Activated T-helper 2 cell treated with anti-CD3 and anti-CD28 coated beads, Interferon-gamma antibody, Interleukin-2, Interleukin-4, amounts not matched to agents 10 μg/mL and 5 μg/mL and 100 μg/mL, durations not matched to agents 14 hours and 24 hours and 36 hours (primary cell): ENCODE measurements at regions of chr3 and their contacts with region 1.

Region 1: GRCh38 chr3:128680602-128681368 is 30.2 kb upstream of the RPN1 start:
- DNase-seq: peak; percentile 96
- H3K4me3 Mint-ChIP-seq: peak overlapping the region; percentile 84
- H3K27ac Mint-ChIP-seq: peak overlapping the region; percentile 98
- H3K4me1 Mint-ChIP-seq: peaks cover 22% of the 10 kb centered on the region
- H3K27me3 Mint-ChIP-seq: no peaks in the 10 kb centered on the region

Region 2: GRCh38 chr3:128617557-128618397 is 63.0 kb before region 1 on chr3:
- intact Hi-C with region 1: loop called (anchors 2 kb)
- DNase-seq: peak; percentile 99
- H3K4me3 Mint-ChIP-seq: peak overlapping the region; percentile 86
- H3K27ac Mint-ChIP-seq: peak overlapping the region; percentile 84
- H3K4me1 Mint-ChIP-seq: peaks cover 31% of the 10 kb centered on the region
- H3K27me3 Mint-ChIP-seq: no peaks in the 10 kb centered on the region

Region 3: DNA sequence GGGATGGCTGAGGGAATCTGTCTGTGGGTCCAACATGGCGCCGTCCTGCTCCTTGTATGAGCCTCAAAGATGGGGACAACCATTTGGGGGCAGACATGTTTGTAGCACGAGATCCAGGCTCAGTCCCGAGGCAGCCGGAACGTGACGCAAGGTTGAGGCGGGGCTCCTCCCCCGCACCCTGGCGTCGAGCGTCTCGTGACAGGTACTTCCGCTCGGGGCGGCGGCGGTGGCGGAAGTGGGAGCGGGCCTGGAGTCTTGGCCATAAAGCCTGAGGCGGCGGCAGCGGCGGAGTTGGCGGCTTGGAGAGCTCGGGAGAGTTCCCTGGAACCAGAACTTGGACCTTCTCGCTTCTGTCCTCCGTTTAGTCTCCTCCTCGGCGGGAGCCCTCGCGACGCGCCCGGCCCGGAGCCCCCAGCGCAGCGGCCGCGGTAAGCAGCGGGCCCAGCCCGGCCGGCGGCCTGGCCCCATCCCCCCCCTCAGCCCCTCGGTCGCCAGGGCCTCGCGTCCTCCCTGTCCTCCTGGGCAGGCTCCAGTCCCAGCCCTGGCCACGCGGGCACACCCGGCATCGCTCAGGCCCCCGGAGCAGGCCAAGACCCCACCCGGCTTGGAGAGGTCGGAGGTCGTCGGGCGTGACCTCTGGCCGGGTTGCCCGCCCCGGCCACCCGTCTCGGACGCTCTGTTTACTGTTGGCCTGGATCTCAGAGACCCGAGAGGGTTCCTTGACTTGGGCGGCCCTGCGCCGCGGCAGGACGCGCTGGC is 45.3 kb after region 1 on chr3 and contains the start of gene RAB7A:
- intact Hi-C with region 1: loop called (anchors 2 kb)
- DNase-seq: peak; percentile 94
- H3K4me3 Mint-ChIP-seq: peak within 1 kb of the TSS; percentile 90
- H3K27ac Mint-ChIP-seq: peak within 1 kb of the TSS; percentile 80
- H3K4me1 Mint-ChIP-seq: peaks cover 46% of the 10 kb centered on the region
- H3K27me3 Mint-ChIP-seq: peaks cover 3% of the 10 kb centered on the region
- total RNA-seq, gene RAB7A: 320 and 322 TPM in 2 replicates

Region 4: GRCh38 chr3:128736601-128737000 is 55.8 kb after region 1 on chr3:
- intact Hi-C with region 1: no loop called
- DNase-seq: no peak
- H3K4me3 Mint-ChIP-seq: no peak overlapping the region
- H3K27ac Mint-ChIP-seq: no peak overlapping the region
- H3K4me1 Mint-ChIP-seq: peaks cover 34% of the 10 kb centered on the region
- H3K27me3 Mint-ChIP-seq: no peaks in the 10 kb centered on the region

Region 5: GRCh38 chr3:128804017-128804810 is 123.4 kb after region 1 on chr3:
- intact Hi-C with region 1: loop called (anchors 1 kb)
- DNase-seq: peak; percentile 69
- H3K4me3 Mint-ChIP-seq: peak overlapping the region; percentile 58
- H3K27ac Mint-ChIP-seq: peak overlapping the region; percentile 88
- H3K4me1 Mint-ChIP-seq: peaks cover 75% of the 10 kb centered on the region
- H3K27me3 Mint-ChIP-seq: no peaks in the 10 kb centered on the region

Region 6: DNA sequence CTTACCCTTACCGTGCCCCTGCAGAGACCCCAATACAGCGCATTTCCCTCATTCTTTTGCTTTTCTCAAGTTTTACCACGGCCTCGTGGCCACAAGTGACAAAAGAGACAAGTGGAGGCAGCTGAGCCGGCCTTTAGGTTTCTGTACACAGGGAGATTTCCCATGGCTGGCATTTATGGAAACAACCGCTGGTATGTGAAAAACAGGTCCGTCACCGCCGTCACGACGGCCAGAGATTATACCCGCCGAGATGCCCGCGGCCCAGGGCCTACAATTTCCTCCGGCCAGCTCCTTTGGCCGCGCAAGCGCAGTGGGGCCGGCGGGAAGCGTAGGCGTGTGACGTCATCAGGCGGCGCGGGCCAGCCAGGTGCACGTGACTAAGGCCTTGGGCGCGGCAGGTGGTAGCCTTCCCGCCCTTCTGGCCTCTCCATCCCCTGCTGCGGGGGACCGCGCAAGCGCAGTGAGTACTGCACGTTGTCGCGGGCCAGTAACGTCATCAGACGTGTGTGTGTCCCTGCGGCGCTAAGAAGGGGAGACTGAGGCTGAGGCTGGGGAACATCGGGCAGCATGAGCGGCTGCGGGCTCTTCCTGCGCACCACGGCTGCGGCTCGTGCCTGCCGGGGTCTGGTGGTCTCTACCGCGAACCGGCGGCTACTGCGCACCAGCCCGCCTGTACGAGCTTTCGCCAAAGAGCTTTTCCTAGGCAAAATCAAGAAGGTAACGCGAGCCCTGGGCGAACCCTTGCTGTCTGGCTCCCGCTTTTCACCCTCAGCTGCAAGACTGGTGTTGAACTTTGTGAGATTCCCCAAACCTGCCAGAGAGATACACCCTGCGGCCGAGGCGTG is 198.6 kb after region 1 on chr3 and contains the start of gene ACAD9:
- intact Hi-C with region 1: loop called (anchors 2 kb)
- DNase-seq: peak; percentile 98
- H3K4me3 Mint-ChIP-seq: peak within 1 kb of the TSS; percentile 93
- H3K27ac Mint-ChIP-seq: peak within 1 kb of the TSS; percentile 95
- H3K4me1 Mint-ChIP-seq: peaks cover 51% of the 10 kb centered on the region
- H3K27me3 Mint-ChIP-seq: no peaks in the 10 kb centered on the region
- total RNA-seq, gene ACAD9: 60.8 and 68.9 TPM in 2 replicates